PC-3 (cell line): ENCODE measurements at regions of chr12 and their contacts with region 1.

Region 1: GRCh38 chr12:92871116-92871515 is 58.0 kb downstream of the EEA1 start:
- DNase-seq: no peak
- ATAC-seq: no peak
- H3K4me3 ChIP-seq: no peak overlapping the region
- H3K27ac ChIP-seq: no peak overlapping the region
- H3K4me1 ChIP-seq: no peaks in the 10 kb centered on the region
- H3K27me3 ChIP-seq: no peaks in the 10 kb centered on the region
- CTCF ChIP-seq: no peak

Region 2: GRCh38 chr12:91912178-91912577 is 958.9 kb before region 1 on chr12:
- CTCF ChIA-PET with region 1: no interaction called
- POLR2A ChIA-PET with region 1: interaction called, 16 read pairs
- intact Hi-C with region 1: no loop called
- DNase-seq: no peak
- ATAC-seq: no peak
- H3K4me3 ChIP-seq: no peak overlapping the region
- H3K27ac ChIP-seq: no peak overlapping the region
- H3K4me1 ChIP-seq: no peaks in the 10 kb centered on the region
- H3K27me3 ChIP-seq: no peaks in the 10 kb centered on the region
- CTCF ChIP-seq: no peak

Region 3: GRCh38 chr12:92439407-92439779 is 431.7 kb before region 1 on chr12:
- CTCF ChIA-PET with region 1: no interaction called
- POLR2A ChIA-PET with region 1: no interaction called
- intact Hi-C with region 1: no loop called
- DNase-seq: peak; percentile 69
- ATAC-seq: peak; percentile 81
- H3K4me3 ChIP-seq: no peak overlapping the region
- H3K27ac ChIP-seq: no peak overlapping the region
- H3K4me1 ChIP-seq: no peaks in the 10 kb centered on the region
- H3K27me3 ChIP-seq: no peaks in the 10 kb centered on the region
- CTCF ChIP-seq: no peak